OCI-LY7 (cell line): ENCODE measurements at regions of chr19 and their contacts with region 1.

Region 1: GRCh38 chr19:58572818-58573657 is at the start of gene MZF1:
- DNase-seq: peak; percentile 100
- H3K4me3 ChIP-seq: peak within 1 kb of the TSS; percentile 76
- H3K27ac ChIP-seq: peak within 1 kb of the TSS; percentile 86
- H3K4me1 ChIP-seq: peaks cover 35% of the 10 kb centered on the region
- CTCF ChIP-seq: no peak
- total RNA-seq, gene MZF1: 20.7 and 30.0 TPM in 2 replicates

Region 2: DNA sequence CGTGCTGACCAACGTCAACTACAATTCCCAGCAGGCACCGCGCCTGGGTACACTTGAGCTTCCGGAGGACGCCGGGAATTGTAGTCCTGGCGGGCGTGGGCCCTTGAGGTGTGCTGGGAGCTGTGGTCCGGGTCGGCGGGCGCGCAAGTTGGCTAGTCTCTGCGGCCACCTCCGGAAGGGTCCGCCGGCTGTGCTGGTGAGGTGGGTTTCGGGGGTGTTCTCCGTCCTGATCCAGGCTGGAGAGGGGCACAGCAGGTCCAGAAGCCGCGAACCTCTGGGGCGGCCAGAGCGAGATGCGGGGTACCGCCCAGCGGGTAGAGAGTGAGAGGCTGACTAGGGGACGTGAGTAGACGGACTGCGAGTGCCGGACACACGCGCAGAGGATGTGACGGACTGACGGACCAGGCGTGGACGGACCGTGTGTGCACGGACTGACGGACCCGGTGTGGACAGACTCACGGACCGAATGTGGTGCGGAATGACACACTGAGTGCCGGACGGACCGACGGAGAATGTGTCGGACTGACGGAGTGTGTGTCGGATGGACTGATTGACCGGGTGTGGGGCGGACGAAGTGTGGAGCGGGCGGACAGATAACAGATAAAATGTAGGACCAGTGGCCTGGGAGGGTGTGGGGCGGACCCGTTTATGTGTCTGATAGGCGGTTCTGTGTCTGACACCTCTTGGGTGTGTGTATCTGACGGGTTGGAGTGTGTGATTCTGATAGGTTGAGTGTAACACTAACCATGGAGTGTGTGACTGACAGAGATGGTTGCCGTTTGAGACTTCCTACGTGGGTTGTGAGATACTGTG is 245.9 kb before region 1 on chr19 and contains the start of gene ZSCAN22:
- CTCF ChIA-PET with region 1: no interaction called
- POLR2A ChIA-PET with region 1: no interaction called
- intact Hi-C with region 1: no loop called
- DNase-seq: peak; percentile 95
- H3K4me3 ChIP-seq: peak within 1 kb of the TSS; percentile 82
- H3K27ac ChIP-seq: peak within 1 kb of the TSS; percentile 13
- H3K4me1 ChIP-seq: peaks cover 16% of the 10 kb centered on the region
- CTCF ChIP-seq: no peak
- total RNA-seq, gene ZSCAN22: 2.6 and 3.3 TPM in 2 replicates

Region 3: GRCh38 chr19:58499021-58499927 is 73.8 kb before region 1 on chr19:
- CTCF ChIA-PET with region 1: no interaction called
- POLR2A ChIA-PET with region 1: no interaction called
- intact Hi-C with region 1: no loop called
- DNase-seq: peak; percentile 98
- H3K4me3 ChIP-seq: peak overlapping the region; percentile 79
- H3K27ac ChIP-seq: peak overlapping the region; percentile 55
- H3K4me1 ChIP-seq: peaks cover 15% of the 10 kb centered on the region
- CTCF ChIP-seq: peak; percentile 59

Region 4: GRCh38 chr19:58513694-58514563 is 59.1 kb before region 1 on chr19:
- CTCF ChIA-PET with region 1: no interaction called
- POLR2A ChIA-PET with region 1: interaction called, 4 read pairs
- intact Hi-C with region 1: loop called (anchors 2 kb)
- DNase-seq: peak; percentile 56
- H3K4me3 ChIP-seq: no peak overlapping the region
- H3K27ac ChIP-seq: no peak overlapping the region
- H3K4me1 ChIP-seq: peaks cover 15% of the 10 kb centered on the region
- CTCF ChIP-seq: peak; percentile 76

Region 5: GRCh38 chr19:58543826-58544590 is 29.0 kb before region 1 on chr19 and contains the start of gene TRIM28:
- CTCF ChIA-PET with region 1: no interaction called
- POLR2A ChIA-PET with region 1: no interaction called
- intact Hi-C with region 1: loop called (anchors 1 kb)
- DNase-seq: peak; percentile 98
- H3K4me3 ChIP-seq: peak within 1 kb of the TSS; percentile 94
- H3K27ac ChIP-seq: peak within 1 kb of the TSS; percentile 87
- H3K4me1 ChIP-seq: peaks cover 20% of the 10 kb centered on the region
- CTCF ChIP-seq: no peak
- total RNA-seq, gene TRIM28: 551 and 729 TPM in 2 replicates

Region 6: GRCh38 chr19:58558623-58559274 is 14.3 kb before region 1 on chr19:
- CTCF ChIA-PET with region 1: no interaction called
- POLR2A ChIA-PET with region 1: no interaction called
- intact Hi-C with region 1: loop called (anchors 1 kb)
- DNase-seq: peak; percentile 99
- H3K4me3 ChIP-seq: peak overlapping the region; percentile 88
- H3K27ac ChIP-seq: peak overlapping the region; percentile 89
- H3K4me1 ChIP-seq: peaks cover 49% of the 10 kb centered on the region
- CTCF ChIP-seq: no peak